ENCODE measurements at regions of chr1 and their contacts with region 1.

Region 1: DNA sequence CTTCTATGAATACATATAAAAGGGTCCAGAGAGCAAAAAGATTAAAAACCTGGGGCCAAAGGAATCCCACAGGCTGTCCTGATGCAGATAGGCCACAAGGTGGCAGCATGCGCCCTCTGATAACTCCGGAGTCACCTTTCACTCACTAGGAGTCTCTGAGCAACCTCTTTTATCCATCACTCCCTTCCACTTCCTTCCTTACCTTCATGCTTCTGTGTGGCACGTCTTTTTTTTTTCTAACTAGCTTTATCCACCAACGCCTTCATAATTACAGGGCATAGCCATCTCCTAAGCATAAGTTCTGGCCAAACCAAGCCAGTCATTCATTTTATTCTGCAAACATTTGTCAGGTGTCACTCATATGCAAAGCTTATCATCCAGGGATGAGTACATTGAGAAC is 3.9 kb upstream of the PGLYRP4 start:
- DNase-seq: peak; percentile 66 to 77
- ATAC-seq: peak; percentile 79 to 93 (median 86)
- H3K4me3 ChIP-seq: no peak overlapping the region
- H3K27ac ChIP-seq: no peak overlapping the region
- H3K4me1 ChIP-seq: no peaks in the 10 kb centered on the region
- H3K27me3 ChIP-seq: peaks cover 0 to 15% (median 3%) of the 10 kb centered on the region in 3 donors
- CTCF ChIP-seq: peak; percentile 94

Region 2: GRCh38 chr1:153395136-153395685 is 42.7 kb after region 1 on chr1:
- intact Hi-C with region 1: loop called in 1 of 2 experiments (anchors 5 kb)
- DNase-seq: peak; percentile 35 to 60
- ATAC-seq: peak; percentile 79 to 88 (median 84)
- H3K4me3 ChIP-seq: no peak overlapping the region
- H3K27ac ChIP-seq: no peak overlapping the region
- H3K4me1 ChIP-seq: no peaks in the 10 kb centered on the region
- H3K27me3 ChIP-seq: no peaks in the 10 kb centered on the region
- CTCF ChIP-seq: no peak

Region 3: DNA sequence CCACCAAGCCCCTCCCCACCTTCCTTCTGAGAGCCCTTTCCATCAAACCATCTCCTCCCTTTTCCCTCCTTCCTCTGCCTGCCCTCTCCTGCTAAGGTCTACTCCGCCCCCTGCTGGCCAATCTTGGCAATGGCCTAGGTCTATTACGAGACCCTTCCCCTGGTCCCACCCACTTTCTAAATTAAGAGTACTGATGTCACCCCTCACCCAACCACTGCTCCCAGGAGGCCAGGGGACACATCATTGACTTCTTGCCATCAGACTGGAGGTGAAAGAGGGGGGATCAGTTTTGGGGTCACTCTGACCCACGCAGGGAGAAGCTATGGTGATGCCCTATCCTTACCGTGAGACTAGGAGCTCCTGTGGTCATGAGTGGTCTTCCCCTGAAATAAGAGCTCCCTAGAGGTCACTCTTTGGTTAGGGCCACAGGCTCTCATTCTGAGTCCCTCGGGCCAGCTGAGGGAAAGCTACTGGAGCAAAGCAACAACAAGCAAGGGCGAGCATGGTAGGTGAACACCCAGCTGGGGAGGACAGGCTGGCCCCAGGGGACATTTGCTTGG is 142.5 kb after region 1 on chr1:
- intact Hi-C with region 1: loop called (anchors 1 to 2 kb)
- DNase-seq: peak; percentile 80 to 89
- ATAC-seq: peak; percentile 55 to 64 (median 60)
- H3K4me3 ChIP-seq: no peak overlapping the region
- H3K27ac ChIP-seq: no peak overlapping the region
- H3K4me1 ChIP-seq: peaks cover 1% of the 10 kb centered on the region
- H3K27me3 ChIP-seq: peaks cover 0 to 3% (median 0%) of the 10 kb centered on the region in 3 donors
- CTCF ChIP-seq: peak; percentile 96

Region 4: DNA sequence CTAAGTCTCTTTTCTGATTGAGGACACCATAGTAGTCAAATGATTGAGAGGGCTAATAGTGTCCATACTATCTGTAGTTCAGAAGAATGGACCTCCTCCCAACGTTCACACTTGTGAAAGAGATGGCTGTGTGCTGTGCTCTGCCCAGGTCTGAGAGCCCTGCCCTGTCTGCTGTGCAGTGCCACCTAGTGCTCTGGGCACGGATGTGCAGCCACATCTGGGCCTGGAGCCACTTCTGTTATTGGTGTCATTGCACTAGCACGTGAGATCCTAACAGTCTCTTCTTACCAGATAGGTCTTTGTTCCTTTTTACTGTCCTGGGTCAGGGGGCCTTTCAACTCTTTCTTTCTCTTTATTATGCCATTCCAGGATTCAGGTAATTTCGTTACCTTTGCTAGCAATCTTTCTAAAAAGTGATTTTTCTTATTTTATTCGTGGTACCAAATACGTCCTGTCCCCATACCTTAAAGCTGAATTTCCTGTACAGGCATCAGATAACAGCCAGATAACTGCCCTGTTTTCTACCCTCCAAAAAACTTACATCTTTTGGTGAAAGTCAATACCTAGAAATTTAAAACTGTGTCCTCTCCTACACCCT is 397.0 kb after region 1 on chr1:
- intact Hi-C with region 1: loop called in 1 of 2 experiments (anchors 10 kb)
- DNase-seq: peak; percentile 86 to 92
- ATAC-seq: peak; percentile 95 to 97 (median 97)
- H3K4me3 ChIP-seq: no peak overlapping the region
- H3K27ac ChIP-seq: peak overlapping the region; percentile 41
- H3K4me1 ChIP-seq: peaks cover 38% of the 10 kb centered on the region
- H3K27me3 ChIP-seq: no peaks in the 10 kb centered on the region
- CTCF ChIP-seq: peak; percentile 97